ENCODE measurements at regions of chr9 and their contacts with region 1.

Region 1: GRCh38 chr9:126490871-126491567 is 122.7 kb upstream of the LMX1B start:
- DNase-seq: peak in 1 of 2 experiments; percentile 61
- ATAC-seq: peak; percentile 49 to 83; a peak in 5 of 6 replicates
- H3K4me3 ChIP-seq: no peak overlapping the region
- H3K27ac ChIP-seq: no peak overlapping the region
- H3K4me1 ChIP-seq: no peaks in the 10 kb centered on the region
- CTCF ChIP-seq: peak; percentile 90
- EP300 ChIP-seq: no peak
- POLR2A ChIP-seq: no peak
- RAD21 ChIP-seq: peak; percentile 92 to 94

Region 2: DNA sequence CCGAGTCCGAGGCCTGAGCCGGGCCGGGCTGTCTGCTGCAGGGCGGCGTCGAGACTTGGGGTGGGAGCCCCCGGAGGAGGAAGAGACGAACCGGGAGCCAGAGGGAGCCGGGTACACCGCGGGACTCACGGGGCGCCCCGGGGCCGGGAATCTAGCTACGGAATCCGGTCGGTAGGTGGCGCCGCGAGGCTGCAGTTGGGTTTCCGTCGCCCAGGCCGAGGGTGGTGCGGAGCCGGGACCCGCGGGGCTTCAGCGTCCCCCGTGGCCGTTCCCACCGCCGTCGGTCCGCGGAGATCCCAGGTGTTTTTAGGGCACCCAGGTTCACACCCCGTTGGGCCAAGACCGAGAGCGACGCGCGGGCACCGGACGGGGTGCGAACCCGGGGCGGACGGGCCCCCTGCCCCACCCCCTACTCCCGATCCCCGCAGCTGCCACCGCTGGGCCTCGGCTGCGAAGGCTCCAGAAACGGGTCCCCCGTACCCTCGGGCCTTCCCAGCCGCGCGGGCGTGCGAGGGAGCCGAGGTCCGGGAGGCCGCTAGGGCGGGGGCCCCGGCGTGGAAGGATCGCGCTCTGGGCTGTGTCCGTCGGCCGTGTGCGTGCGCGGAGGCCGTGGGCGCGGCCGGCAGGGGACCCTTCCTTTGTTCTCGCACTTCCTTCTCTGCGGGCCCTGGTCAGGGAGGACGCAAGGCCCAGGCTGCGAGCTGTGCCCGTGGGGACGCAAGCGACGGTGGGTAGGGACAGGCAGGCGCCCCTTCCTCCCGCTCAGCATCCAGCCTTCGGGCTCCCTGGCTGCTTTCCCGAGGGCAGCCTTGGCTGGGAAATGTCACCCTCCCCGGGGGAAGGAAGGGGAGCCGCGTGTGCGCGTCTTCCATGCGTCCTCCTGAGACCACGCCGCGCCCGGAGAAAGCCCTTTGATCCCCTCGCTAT is 1082.8 kb before region 1 on chr9:
- CTCF ChIA-PET with region 1: interaction called, 24 read pairs
- POLR2A ChIA-PET with region 1: no interaction called
- DNase-seq: peak; percentile 74 to 96
- ATAC-seq: peak; percentile 79 to 92
- H3K4me3 ChIP-seq: peak overlapping the region; percentile 85
- H3K27ac ChIP-seq: peak overlapping the region; percentile 88
- H3K4me1 ChIP-seq: 0 out of 3 replicates have a peak, but pooled peaks cover 4% of the 10 kb centered on the region
- CTCF ChIP-seq: peak; percentile 94
- EP300 ChIP-seq: no peak
- POLR2A ChIP-seq: no peak
- RAD21 ChIP-seq: peak; percentile 93 to 98

Region 3: DNA sequence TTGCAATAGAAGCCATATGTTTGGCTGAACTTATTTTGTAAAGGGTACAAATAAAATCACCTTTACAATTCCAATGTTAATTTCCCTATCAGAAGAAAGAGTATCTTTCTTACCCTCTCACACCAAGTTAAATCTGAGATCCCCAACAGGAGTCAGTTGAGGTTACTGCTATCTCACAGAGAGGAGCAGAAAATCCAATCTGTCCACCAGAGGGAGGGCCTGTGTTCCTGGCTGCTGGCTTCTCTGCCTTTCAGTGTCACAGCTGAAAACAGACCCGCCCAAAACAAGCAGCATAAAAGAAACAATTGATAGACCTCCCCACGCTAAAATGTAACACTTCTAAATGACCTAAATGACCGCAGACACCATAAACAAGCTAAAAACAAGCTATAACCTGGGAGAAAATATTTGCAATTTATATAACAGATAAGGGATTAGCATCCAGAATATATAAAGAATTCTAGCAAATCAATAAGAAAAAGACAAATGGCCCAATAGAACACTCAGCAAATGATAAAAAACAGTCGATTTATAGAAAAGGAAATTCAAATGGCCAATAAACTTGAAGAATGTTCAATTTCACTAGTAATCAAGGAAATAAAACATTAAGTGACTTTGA is 188.9 kb before region 1 on chr9:
- CTCF ChIA-PET with region 1: interaction called, 84 read pairs
- POLR2A ChIA-PET with region 1: no interaction called
- DNase-seq: peak; percentile 64 to 75
- ATAC-seq: peak; percentile 91 to 95
- H3K4me3 ChIP-seq: no peak overlapping the region
- H3K27ac ChIP-seq: no peak overlapping the region
- H3K4me1 ChIP-seq: no peaks in the 10 kb centered on the region
- CTCF ChIP-seq: peak; percentile 69
- EP300 ChIP-seq: no peak
- POLR2A ChIP-seq: no peak
- RAD21 ChIP-seq: peak; percentile 64 to 74

Region 4: DNA sequence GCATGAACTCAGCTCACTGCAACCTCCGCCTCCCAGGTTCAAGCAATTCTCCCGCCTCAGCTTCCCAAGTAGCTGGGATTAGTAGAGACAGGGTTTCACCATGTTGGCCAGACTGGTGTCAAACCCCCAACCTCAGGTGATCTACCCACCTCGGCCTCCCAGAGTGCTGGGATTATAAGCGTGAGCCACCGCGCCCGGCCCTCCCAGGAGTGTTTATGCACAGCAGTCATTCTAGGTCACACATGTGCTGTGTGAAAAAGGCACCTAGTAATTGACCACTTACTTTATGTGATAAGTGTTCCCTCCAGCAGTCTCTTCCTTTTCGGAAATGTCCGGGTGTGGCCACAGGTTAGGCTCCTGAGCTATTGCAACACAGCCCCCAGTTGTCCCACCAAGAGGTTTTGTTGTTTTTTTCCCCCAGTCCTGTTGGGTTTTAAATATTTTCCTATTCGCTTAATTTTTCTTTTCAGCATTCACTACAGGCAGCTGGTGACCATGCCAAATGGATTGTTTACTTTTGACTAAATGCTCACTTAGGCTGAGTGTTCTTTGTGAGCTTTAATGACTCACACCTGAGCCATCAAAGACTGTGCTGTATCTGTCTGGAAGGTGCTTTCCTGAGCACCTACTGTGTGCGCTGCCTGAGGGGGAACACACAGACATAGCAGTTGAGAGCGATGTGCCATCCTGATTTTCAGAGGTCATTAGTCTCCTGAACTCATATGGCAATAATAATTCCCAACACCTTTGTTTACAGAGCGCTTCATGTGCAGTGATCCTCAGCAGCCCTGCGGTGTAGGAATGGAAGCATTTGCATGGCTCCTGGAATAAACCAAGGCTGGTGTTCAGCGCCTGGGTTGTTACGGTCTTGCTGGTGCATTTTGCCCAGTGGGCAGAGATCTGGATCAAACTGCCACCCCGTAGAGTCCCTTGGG is 70.1 kb before region 1 on chr9:
- CTCF ChIA-PET with region 1: interaction called, 20 read pairs
- POLR2A ChIA-PET with region 1: no interaction called
- DNase-seq: peak; percentile 35 to 55
- ATAC-seq: peak; percentile 80 to 81; a peak in 5 of 6 replicates
- H3K4me3 ChIP-seq: no peak overlapping the region
- H3K27ac ChIP-seq: peak overlapping the region; percentile 29 to 70; a peak in 4 of 6 replicates
- H3K4me1 ChIP-seq: peaks cover 31% of the 10 kb centered on the region
- CTCF ChIP-seq: no peak
- EP300 ChIP-seq: no peak
- POLR2A ChIP-seq: no peak
- RAD21 ChIP-seq: no peak

Region 5: DNA sequence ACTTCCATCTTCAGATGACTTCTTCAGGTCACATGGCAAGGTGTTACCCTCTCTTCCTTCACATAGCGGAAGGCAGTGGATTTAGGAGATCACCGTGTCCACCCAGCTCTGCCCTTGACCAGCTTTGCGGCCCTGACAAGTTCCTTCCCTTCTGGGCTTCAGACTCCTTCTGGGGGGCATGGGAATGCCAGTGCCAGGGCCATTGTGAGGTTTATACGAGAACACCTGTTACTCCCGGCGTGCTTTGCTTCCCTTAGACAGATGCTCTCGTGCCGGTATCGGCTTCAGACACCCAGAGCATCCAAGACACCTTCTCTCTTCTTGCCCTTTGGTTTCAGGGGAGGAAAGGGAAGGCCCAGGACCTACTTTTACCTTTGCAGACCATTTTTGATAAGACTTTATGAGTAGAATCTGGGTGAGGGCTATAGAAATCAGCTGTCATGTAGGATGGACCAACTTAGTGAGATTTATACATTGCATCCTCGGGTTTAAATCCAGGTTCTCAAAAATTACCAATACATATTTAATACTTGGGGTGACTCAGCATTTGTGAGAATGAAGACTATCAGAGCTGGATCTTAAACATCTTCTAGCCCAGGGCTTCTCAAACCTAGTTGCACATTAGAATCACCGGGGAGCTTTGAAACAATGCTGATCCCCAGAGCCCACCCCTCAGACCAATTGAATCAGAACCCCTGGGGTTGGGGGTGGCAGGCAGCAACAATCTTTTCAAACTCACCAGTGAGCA is 26.2 kb before region 1 on chr9:
- CTCF ChIA-PET with region 1: interaction called, 14 read pairs
- POLR2A ChIA-PET with region 1: no interaction called
- DNase-seq: no peak
- ATAC-seq: no peak
- H3K4me3 ChIP-seq: no peak overlapping the region
- H3K27ac ChIP-seq: peak overlapping the region in 1 of 2 experiments; percentile 60; a peak in 2 of 6 replicates
- H3K4me1 ChIP-seq: peaks cover 7% of the 10 kb centered on the region; the same call in 2 of the 3 replicates
- CTCF ChIP-seq: no peak
- EP300 ChIP-seq: no peak
- POLR2A ChIP-seq: no peak
- RAD21 ChIP-seq: no peak

Region 6: GRCh38 chr9:126558051-126558665 is 67.1 kb after region 1 on chr9:
- CTCF ChIA-PET with region 1: interaction called, 225 read pairs
- POLR2A ChIA-PET with region 1: no interaction called
- DNase-seq: peak; percentile 51 to 72
- ATAC-seq: peak; percentile 79 to 86; a peak in 5 of 6 replicates
- H3K4me3 ChIP-seq: no peak overlapping the region
- H3K27ac ChIP-seq: no peak overlapping the region
- H3K4me1 ChIP-seq: no peaks in the 10 kb centered on the region
- CTCF ChIP-seq: peak; percentile 80
- EP300 ChIP-seq: no peak
- POLR2A ChIP-seq: no peak
- RAD21 ChIP-seq: peak; percentile 85 to 88

Region 7: DNA sequence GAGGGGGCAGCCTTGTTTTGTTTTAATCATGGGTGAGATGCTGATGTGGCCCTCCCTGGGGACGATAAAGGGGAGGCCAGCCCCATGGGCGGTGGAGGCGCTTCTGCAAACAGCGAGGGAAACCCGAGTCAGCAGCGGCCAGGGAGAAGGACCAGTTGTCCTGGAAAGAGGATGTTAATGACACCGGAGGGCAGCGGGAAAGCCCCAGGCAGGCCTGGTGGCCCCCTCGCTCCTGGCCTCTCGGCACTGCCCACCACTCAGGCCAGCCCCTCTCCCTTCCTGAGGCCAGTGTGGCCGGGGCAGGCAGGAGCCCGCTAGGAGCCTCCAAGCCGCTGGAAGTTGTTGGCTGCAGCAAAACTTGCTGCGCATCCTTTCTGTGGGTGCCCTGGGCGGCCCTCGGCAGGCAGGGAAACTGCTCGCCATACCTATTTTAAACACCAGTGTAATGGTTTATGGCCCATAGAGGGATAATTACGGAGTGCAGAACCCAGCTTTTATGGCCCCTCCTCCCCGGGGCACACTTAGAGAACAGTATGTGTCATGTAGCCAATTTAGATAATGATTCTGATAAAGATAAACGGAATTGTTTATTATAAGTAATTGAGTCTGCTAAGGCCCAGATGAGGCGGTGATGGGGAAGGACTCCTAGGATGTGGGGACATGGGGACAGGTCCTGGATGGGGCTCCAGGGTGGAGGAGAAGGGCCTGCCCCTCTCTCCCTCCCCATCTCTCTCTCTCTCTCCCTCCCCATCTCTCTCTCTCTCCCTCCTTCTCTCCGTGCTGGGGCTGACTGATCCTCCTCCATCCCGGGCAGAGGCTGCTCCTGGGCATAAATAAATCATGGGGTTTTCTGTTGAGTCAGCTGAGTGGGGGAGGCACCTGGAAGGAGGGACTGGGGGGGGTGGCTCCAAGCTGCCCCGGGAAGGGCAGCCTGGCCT is 159.7 kb after region 1 on chr9:
- CTCF ChIA-PET with region 1: no interaction called
- POLR2A ChIA-PET with region 1: no interaction called
- DNase-seq: no peak
- ATAC-seq: no peak
- H3K4me3 ChIP-seq: no peak overlapping the region
- H3K27ac ChIP-seq: no peak overlapping the region
- H3K4me1 ChIP-seq: no peaks in the 10 kb centered on the region
- CTCF ChIP-seq: no peak
- EP300 ChIP-seq: no peak
- POLR2A ChIP-seq: no peak
- RAD21 ChIP-seq: no peak